ENCODE measurements at regions of chr2 and their contacts with region 1.

Region 1: GRCh38 chr2:85728883-85729824 is 24.6 kb upstream of the ATOH8 start:
- DNase-seq: peak; percentile 83 to 93 (median 88)
- H3K4me3 ChIP-seq: peak overlapping the region in 20 of 59 donors; percentile 1 to 34 (median 16)
- H3K27ac ChIP-seq: peak overlapping the region in 43 of 59 donors; percentile 2 to 78 (median 53)
- H3K27me3 ChIP-seq: no peaks in the 10 kb centered on the region
- CTCF ChIP-seq: peak; percentile 88 to 99 (median 97)

Region 2: GRCh38 chr2:85750587-85751575 is 21.7 kb after region 1 on chr2:
- intact Hi-C with region 1: loop called in 1 of 2 experiments (anchors 1 kb)
- DNase-seq: peak; percentile 68 to 87 (median 80)
- H3K4me3 ChIP-seq: no peak overlapping the region
- H3K27ac ChIP-seq: peak overlapping the region in 42 of 59 donors; percentile 3 to 87 (median 42)
- H3K27me3 ChIP-seq: peaks cover 0 to 6% (median 0%) of the 10 kb centered on the region in 45 donors
- CTCF ChIP-seq: peak; percentile 38 to 93 (median 85)

Region 3: DNA sequence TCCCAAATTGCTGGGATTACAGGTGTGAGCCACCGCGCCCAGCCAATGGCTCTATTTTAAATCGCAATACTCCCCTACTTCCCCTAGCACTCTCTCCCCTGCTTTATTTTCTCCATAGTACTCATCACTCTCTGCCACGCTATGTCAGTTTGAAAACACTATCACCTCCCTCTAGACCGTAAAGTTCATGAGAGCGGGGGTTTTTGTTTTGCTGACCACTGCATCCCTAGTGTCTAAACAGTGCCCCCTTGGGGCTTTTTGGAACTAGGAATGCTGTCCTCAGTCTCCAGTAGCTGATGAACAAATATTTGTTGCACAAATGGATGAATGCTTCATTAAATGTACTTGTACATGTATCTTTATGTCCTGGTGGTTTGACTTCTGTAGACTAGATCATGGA is 68.8 kb after region 1 on chr2:
- intact Hi-C with region 1: loop called in 1 of 2 experiments (anchors 5 kb)
- DNase-seq: peak in 4 of 10 donors; percentile 35 to 64 (median 52)
- H3K4me3 ChIP-seq: no peak overlapping the region
- H3K27ac ChIP-seq: peak overlapping the region in 39 of 59 donors; percentile 55 to 99 (median 94)
- H3K27me3 ChIP-seq: no peaks in the 10 kb centered on the region
- CTCF ChIP-seq: peak in 55 of 56 donors; percentile 44 to 86 (median 68)

Region 4: GRCh38 chr2:85813982-85814801 is 85.0 kb after region 1 on chr2:
- intact Hi-C with region 1: loop called (anchors 1 to 2 kb)
- DNase-seq: peak; percentile 91 to 96 (median 94)
- H3K4me3 ChIP-seq: no peak overlapping the region
- H3K27ac ChIP-seq: peak overlapping the region in 2 of 59 donors; percentile 13 to 36
- H3K27me3 ChIP-seq: no peaks in the 10 kb centered on the region
- CTCF ChIP-seq: peak; percentile 83 to 100 (median 98)

Region 5: GRCh38 chr2:85949280-85949679 is 220.1 kb after region 1 on chr2:
- intact Hi-C with region 1: no loop called
- DNase-seq: no peak
- H3K4me3 ChIP-seq: no peak overlapping the region
- H3K27ac ChIP-seq: no peak overlapping the region
- H3K27me3 ChIP-seq: no peaks in the 10 kb centered on the region
- CTCF ChIP-seq: no peak